ENCODE measurements at regions of chr3 and their contacts with region 1.

Region 1: GRCh38 chr3:44712455-44713075 is at the start of gene ZNF502:
- DNase-seq: peak; percentile 88 to 91 (median 90)
- ATAC-seq: peak; percentile 96 to 100 (median 100)
- H3K4me3 ChIP-seq: peak within 1 kb of the TSS; percentile 58 to 100 (median 80)
- H3K27ac ChIP-seq: peak within 1 kb of the TSS in 11 of 12 donors; percentile 43 to 76 (median 72)
- H3K4me1 ChIP-seq: peaks cover 0 to 12% (median 3%) of the 10 kb centered on the region in 12 donors
- H3K27me3 ChIP-seq: peaks cover 0 to 10% (median 0%) of the 10 kb centered on the region in 9 donors
- CTCF ChIP-seq: peak; percentile 6 to 62 (median 34)
- POLR2A ChIP-seq: no peak
- total RNA-seq, gene ZNF502: 1.9 to 4.8 (median 3.5) TPM

Region 2: GRCh38 chr3:44529927-44530326 is 182.6 kb before region 1 on chr3:
- intact Hi-C with region 1: loop called in 1 of 10 experiments (anchors 10 kb)
- DNase-seq: no peak
- ATAC-seq: no peak
- H3K4me3 ChIP-seq: no peak overlapping the region
- H3K27ac ChIP-seq: no peak overlapping the region
- H3K4me1 ChIP-seq: no peaks in the 10 kb centered on the region
- H3K27me3 ChIP-seq: peaks cover 0 to 40% (median 0%) of the 10 kb centered on the region in 9 donors
- CTCF ChIP-seq: peak in 3 of 12 donors; percentile 4 to 21 (median 4)
- POLR2A ChIP-seq: no peak

Region 3: DNA sequence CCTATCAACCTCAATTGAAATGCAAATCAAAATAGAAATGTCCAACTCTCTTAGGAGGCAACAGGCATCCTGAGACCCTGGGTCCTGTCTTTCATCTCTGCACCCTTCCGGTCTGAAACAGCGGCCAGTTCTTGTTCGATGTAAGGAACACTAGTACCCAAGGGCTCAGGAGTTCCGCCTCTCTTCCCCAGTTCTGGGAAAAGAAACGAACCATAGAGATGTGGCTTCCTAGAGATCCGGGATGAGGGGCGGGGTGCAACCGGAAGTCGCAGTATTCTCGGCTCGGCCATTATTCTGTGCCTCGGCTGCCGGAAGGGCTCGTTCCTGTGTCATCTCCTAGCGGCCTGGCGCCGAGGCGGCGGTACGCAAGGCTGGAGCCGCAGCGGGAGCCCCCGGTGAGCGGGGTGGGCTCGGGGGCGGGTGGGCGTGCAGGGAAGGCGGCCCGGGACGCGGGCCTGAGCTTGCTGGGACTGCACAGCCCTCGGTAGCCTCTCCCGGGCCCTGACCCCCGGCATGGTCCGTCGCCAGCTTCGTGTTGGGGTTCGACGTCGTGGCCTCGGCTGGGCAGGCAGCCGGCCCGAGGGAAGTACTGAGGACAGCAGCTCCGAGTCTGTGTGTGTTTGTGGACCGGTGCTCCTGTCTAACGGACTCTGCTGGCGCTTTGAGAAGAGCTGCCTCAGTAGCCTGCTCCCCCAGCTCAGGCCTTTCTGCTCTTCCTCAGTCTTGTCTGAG is 87.7 kb before region 1 on chr3 and contains the start of gene ZNF197:
- intact Hi-C with region 1: loop called in 1 of 10 experiments (anchors 1 kb)
- DNase-seq: peak; percentile 89 to 93 (median 90)
- ATAC-seq: peak; percentile 95 to 99 (median 98)
- H3K4me3 ChIP-seq: peak within 1 kb of the TSS; percentile 70 to 96 (median 92)
- H3K27ac ChIP-seq: peak within 1 kb of the TSS; percentile 75 to 97 (median 93)
- H3K4me1 ChIP-seq: peaks cover 0 to 41% (median 25%) of the 10 kb centered on the region in 12 donors
- H3K27me3 ChIP-seq: no peaks in the 10 kb centered on the region
- CTCF ChIP-seq: peak in 4 of 12 donors; percentile 11 to 52 (median 38)
- POLR2A ChIP-seq: peak in 1 of 2 donors; percentile 43
- total RNA-seq, gene ZNF197: 7.8 to 16.4 (median 11.9) TPM

Region 4: GRCh38 chr3:44729384-44729910 is 16.9 kb after region 1 on chr3 and contains the start of gene ZNF501:
- intact Hi-C with region 1: loop called in 6 of 10 experiments (anchors 1 to 2 kb)
- DNase-seq: peak; percentile 94 to 97 (median 95)
- ATAC-seq: peak; percentile 95 to 100 (median 100)
- H3K4me3 ChIP-seq: peak within 1 kb of the TSS; percentile 46 to 94 (median 78)
- H3K27ac ChIP-seq: peak within 1 kb of the TSS in 10 of 12 donors; percentile 18 to 75 (median 57)
- H3K4me1 ChIP-seq: peaks cover 0 to 12% (median 3%) of the 10 kb centered on the region in 12 donors
- H3K27me3 ChIP-seq: no peaks in the 10 kb centered on the region
- CTCF ChIP-seq: peak in 1 of 12 donors; percentile 25
- POLR2A ChIP-seq: peak in 1 of 2 donors; percentile 53
- total RNA-seq, gene ZNF501: 1.8 to 5.5 (median 3.9) TPM

Region 5: GRCh38 chr3:44761424-44762169 is 49.0 kb after region 1 on chr3 and contains the starts of genes KIAA1143 and KIF15:
- intact Hi-C with region 1: loop called in 2 of 10 experiments (anchors 1 to 2 kb)
- DNase-seq: peak; percentile 95 to 98 (median 96)
- ATAC-seq: peak; percentile 99 to 100 (median 100)
- H3K4me3 ChIP-seq: peak within 1 kb of the TSS; percentile 63 to 94 (median 74)
- H3K27ac ChIP-seq: peak within 1 kb of the TSS in 11 of 12 donors; percentile 34 to 84 (median 72)
- H3K4me1 ChIP-seq: peaks cover 0 to 20% (median 13%) of the 10 kb centered on the region in 12 donors
- H3K27me3 ChIP-seq: no peaks in the 10 kb centered on the region
- CTCF ChIP-seq: peak in 2 of 12 donors; percentile 17 to 22
- POLR2A ChIP-seq: peak in 1 of 2 donors; percentile 53
- total RNA-seq, gene KIAA1143: 21.9 to 41.7 (median 30.5) TPM
- total RNA-seq, gene KIF15: 0.16 to 3.0 (median 0.77) TPM in 8 of 9 donors, not detected in the other

Region 6: DNA sequence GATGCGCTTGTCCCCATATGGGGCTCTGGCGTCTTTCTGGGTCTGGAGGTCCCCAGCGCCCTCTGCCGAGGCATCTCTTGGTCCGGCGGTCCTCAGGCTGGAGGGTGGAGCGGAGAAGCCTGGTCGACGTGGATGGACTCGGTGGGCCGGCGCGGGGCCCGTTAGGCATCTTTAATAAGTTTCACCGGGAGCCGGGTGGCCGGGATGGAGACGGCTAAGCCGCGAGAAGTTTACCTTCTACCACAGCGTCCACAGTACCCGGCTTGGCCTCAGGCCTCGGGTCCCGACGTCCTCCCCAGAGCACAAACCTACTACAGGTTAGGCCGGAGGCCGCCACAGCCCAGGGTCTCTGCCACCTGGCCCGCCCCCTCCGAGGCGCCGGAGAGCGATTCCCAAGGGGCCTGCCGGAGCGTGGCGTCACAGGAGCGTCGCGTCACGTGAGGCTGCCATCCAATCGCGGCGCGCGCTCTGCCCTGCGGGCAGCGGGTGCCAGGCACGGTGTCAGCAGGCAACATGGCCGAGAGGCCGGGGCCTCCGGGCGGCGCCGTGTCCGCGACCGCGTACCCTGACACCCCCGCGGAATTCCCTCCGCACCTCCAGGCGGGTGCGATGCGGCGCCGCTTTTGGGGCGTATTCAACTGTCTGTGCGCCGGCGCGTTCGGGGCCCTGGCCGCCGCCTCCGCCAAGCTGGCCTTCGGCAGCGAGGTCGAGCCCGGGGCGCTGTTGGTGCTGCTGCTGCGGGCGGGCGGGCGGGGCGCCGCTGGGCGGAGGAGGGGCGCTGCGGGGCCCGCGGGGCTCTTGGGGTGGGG is 149.1 kb after region 1 on chr3 and contains the start of gene TMEM42:
- intact Hi-C with region 1: loop called in 1 of 10 experiments (anchors 5 kb)
- DNase-seq: peak; percentile 90 to 96 (median 94)
- ATAC-seq: peak; percentile 96 to 99 (median 99)
- H3K4me3 ChIP-seq: peak within 1 kb of the TSS; percentile 20 to 84 (median 70)
- H3K27ac ChIP-seq: peak within 1 kb of the TSS; percentile 57 to 96 (median 89)
- H3K4me1 ChIP-seq: peaks cover 0 to 20% (median 8%) of the 10 kb centered on the region in 12 donors
- H3K27me3 ChIP-seq: no peaks in the 10 kb centered on the region
- CTCF ChIP-seq: peak; percentile 5 to 51 (median 28)
- POLR2A ChIP-seq: peak in 1 of 2 donors; percentile 81
- total RNA-seq, gene TMEM42: 7.3 to 13.0 (median 10.6) TPM

Region 7: GRCh38 chr3:44913868-44914468 is 201.4 kb after region 1 on chr3:
- intact Hi-C with region 1: loop called in 1 of 10 experiments (anchors 5 kb)
- DNase-seq: peak; percentile 46 to 81 (median 65)
- ATAC-seq: peak; percentile 24 to 78 (median 68)
- H3K4me3 ChIP-seq: no peak overlapping the region
- H3K27ac ChIP-seq: no peak overlapping the region
- H3K4me1 ChIP-seq: peaks cover 0 to 15% (median 2%) of the 10 kb centered on the region in 12 donors
- H3K27me3 ChIP-seq: peaks cover 0 to 6% (median 0%) of the 10 kb centered on the region in 9 donors
- CTCF ChIP-seq: peak; percentile 61 to 86 (median 78)
- POLR2A ChIP-seq: no peak